Right ventricle myocardium inferior (tissue), 1 donor: ENCODE measurements at regions of chr11 and their contacts with region 1.

Region 1: DNA sequence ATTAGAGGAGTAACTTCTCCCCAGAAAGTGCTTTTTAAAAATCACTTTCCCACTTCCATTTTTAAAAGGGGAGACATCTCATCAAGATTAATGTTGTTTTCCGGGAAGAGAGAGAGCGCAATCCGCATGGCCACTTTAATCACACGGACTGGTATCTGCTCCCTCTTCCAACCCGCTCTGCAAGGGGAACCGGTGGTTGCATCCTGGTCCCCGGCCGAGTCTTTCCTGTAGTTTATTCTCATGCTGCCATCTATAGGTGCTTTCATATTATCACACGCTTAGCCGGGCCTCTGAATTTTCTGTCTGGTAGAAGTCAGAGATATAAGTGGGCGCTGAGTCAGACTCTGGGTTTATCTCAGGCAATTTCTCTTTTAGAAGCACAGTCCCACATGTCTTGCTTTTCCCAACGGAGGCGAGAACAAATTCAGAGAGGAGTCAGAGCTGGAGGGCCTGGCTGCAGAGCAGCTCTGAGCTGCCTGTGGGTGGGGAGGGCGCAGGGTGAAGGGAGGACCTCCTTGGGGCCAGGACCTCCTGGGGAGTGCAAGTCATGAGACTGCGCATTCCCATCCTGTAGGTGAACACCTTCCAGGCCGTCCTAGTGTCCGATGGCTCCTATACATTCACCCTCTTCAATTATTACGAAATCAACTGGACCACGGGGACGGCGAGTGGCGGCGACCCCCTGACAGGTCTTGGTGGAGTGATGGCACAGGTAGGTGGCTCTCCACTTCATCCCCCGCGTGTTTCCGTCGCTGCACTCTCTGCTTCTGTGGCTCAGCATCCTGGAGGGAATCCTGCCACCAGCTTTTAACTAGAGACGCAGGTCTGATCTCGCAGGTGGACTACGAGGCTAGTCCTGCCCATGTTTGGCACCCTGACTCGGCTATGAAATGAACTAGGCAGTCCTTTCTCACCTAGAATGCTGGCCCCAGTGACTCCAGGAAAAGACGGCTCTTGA is 11.7 kb downstream of the TECTA start:
- DNase-seq: no peak
- ATAC-seq: peak; percentile 84

Region 2: DNA sequence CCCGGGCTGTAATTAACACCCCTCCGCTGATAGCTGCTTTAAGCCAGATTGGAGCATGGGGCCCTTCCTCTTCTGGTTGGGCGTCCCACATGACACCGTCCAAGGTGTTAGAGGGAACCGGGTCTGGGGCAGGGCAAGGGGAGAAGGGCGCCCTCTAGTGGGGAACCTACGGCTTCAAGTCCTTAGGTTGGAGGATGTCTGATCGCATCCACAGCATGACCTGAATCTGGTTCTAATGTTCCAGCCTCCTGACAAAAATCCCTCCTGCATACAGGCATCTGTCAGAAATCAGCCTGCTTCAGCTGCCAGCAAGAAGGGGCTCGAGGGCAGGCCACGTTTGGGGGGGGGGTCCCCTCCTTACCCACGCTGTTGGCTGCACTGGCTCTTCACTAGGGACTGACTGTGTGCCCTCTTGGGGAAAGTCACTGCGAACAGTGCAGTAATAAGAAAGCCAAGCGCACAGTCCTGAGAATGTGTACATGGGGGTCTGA is 183.1 kb before region 1 on chr11:
- intact Hi-C with region 1: loop called (anchors 5 kb)
- DNase-seq: no peak
- ATAC-seq: peak; percentile 38

Region 3: DNA sequence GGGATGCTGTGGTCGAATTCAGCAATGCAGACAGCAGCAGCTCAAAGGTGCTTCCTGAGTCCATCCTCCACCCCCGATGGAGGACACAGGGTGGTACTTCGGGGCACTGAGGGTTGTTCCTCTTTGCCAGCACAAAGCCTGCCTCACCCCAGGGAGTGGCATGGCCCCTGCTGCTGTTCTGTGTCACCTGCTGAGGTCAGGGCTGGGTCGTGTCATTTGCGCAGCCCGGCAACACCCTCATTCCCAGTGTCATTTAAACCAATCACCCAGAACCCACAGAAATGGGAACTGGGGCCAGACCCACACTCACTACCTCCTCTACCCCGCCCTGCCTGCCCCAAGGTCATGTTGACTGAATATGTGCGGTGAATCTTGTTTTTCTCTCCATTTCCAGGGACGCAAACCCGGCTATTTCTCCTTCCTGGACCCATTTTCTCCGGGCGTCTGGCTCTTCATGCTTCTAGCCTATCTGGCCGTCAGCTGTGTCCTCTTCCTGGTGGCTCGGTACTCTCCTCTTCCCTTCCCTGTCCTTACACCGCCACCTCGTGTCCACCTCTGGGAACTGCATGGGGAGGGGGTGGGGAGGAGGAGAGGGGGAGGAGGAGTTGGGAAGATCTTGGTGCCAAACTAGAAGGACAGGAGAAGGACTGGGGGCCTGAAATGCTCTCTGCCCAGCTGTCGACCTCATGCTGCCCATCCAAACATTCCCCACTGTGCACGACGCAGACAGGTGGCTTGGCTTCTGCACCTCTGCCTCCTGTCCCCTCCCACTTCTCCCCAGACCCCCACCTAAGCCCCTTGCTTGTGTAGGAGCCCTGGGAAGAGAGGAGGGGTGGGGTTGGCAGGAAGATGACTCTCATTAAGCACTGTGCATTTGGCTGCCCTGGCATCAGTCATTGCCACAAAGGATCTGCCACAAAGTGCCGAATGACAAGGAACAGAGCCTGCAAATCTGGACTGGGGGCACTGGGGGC is 160.0 kb before region 1 on chr11:
- intact Hi-C with region 1: loop called (anchors 5 kb)
- DNase-seq: peak; percentile 85
- ATAC-seq: peak; percentile 94

Region 4: GRCh38 chr11:120977266-120978137 is 135.3 kb before region 1 on chr11:
- intact Hi-C with region 1: no loop called
- DNase-seq: no peak
- ATAC-seq: no peak

Region 5: GRCh38 chr11:121035780-121036179 is 77.0 kb before region 1 on chr11:
- intact Hi-C with region 1: no loop called
- DNase-seq: no peak
- ATAC-seq: no peak

Region 6: DNA sequence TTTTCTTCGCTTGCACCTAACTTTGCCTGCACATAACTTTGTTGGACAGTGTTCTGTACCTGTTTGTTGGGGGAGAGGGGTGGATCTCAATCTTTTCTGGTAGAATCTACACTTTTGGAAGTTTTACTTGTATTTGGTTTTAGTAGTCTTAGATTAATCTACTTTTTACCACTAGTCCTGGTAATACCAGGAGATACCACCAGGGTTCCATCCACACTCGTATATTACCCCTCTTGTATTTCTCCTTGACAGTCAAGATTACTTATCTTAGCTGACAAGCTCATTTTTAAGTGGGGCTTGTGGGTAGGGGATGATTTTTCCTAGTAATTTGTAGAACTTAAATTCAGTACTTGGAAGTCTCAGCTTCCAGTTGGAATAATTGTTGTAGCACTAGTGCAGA is 49.0 kb before region 1 on chr11:
- intact Hi-C with region 1: no loop called
- DNase-seq: no peak
- ATAC-seq: no peak